ENCODE measurements at regions of chr18 and their contacts with region 1.

Region 1: DNA sequence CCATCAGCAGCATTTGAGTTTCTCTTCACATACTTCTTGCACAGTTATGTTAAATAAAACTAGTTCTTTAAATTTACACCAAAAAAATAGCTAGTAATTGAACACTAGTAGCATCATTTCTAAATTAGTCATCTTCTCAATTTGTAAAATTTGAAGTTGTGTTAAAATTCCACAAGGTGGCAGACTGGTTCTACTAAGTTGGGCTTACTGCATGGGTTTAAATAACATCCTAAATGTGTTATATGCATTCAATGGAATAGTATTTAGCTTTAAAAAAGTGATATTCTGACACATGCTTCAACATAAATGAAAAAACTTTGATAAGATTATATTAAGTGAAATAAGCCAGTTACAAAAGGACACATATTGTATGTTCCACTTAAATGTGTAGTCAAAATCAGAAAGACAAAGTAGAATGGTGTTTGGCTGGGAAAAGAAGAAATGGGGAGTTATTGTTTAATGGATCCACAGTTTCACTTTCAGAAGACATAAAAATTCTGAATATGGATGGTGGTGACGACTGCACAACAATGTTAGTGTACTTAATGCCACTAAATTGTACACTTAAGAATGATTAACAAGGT is 28.7 kb upstream of the RPRD1A start:
- DNase-seq: no peak
- H3K4me3 Mint-ChIP-seq: no peak overlapping the region
- H3K27ac Mint-ChIP-seq: no peak overlapping the region
- H3K4me1 Mint-ChIP-seq: no peaks in the 10 kb centered on the region
- H3K27me3 Mint-ChIP-seq: no peaks in the 10 kb centered on the region

Region 2: DNA sequence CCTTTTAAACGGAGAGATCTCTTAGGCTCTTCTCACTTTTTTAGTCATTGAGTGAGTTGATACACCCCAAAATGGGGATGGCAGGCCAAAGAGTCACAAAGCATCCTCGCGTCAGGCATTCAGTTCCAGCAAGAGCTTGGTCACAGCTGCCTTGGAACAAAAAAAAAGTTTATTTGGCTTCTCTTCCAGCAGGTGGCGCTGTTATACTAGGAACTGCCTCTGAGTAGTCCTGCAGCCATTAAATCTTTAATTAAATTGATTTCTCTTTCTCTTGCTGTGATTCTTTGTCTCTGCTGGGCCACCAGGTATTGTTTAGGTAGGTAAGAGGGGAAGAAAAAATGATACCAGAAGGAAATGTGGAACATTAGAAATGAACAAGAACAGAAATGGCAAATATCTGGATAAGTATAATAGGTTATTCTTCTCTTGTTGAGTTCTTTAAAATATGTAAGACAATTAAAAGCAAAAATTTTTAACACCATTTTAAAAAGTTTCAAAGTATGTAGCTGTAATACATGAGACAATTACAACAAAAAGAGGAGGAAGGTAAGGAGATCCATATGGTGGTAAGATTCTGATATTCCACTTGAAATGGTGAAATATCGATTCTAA is 339.4 kb before region 1 on chr18:
- CTCF ChIA-PET with region 1: interaction called, 3 read pairs
- intact Hi-C with region 1: loop called (anchors 2 kb)
- DNase-seq: peak; percentile 78
- H3K4me3 Mint-ChIP-seq: no peak overlapping the region
- H3K27ac Mint-ChIP-seq: no peak overlapping the region
- H3K4me1 Mint-ChIP-seq: no peaks in the 10 kb centered on the region
- H3K27me3 Mint-ChIP-seq: peaks cover 18% of the 10 kb centered on the region

Region 3: DNA sequence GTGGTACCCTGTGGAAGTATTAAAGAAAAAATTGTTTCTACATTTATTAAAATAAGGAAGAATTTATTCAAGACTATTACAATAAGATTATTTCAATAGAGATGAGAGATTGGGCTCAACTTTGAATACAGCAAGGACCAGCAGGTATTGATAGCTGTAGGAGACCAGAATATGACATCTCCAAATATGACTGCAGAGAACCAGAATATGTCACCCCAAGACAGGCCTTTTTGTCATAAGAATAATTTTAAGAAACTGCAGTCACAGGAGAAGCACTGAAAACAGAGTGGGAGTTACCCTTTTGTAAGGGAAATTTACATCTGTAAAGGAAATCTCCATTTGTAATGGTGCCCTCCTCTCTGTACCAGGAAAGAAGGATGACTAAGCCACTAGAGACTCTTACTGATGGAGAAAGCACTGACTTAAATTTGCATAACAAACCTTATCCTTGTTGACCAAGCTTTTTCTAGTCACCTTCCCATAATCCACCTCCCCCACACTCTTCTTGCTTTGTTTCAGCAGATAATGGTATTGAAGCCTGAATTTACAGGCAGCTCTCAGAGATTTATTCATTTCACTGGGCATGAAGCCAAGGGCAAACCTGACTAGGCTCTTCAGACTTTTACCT is 268.6 kb before region 1 on chr18:
- CTCF ChIA-PET with region 1: no interaction called
- intact Hi-C with region 1: no loop called
- DNase-seq: peak; percentile 62
- H3K4me3 Mint-ChIP-seq: no peak overlapping the region
- H3K27ac Mint-ChIP-seq: peak overlapping the region; percentile 75
- H3K4me1 Mint-ChIP-seq: peaks cover 15% of the 10 kb centered on the region
- H3K27me3 Mint-ChIP-seq: peaks cover 22% of the 10 kb centered on the region

Region 4: DNA sequence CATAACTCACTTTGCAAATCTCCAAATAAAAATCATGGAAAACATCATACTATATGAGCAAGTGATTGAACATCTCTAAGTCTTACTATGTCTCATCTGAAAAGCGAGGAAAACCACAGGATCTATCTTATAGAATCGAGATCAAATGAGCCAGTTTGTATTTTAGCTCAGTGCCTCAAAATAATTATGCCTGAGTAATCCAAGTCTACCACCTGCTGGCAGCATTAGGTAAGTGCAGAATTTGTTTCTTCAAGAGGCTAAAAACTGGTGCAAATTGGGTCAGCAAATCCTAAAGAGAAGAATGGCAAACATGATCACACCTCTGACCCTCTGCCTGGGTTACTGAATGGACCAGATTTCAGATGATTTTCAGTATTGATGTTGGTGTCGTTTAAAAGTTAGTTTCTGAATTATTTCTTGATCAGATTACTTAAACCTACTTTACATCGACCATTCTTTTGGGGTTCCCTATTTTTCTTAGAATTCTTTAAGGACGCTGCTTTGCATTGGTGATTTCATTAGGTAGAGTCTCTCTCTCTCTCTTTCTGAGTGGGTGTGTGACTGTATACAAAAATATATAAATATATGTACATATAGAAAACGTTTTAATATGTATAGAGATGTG is 188.8 kb after region 1 on chr18:
- CTCF ChIA-PET with region 1: interaction called, 60 read pairs
- intact Hi-C with region 1: loop called (anchors 1 kb)
- DNase-seq: peak; percentile 55
- H3K4me3 Mint-ChIP-seq: no peak overlapping the region
- H3K27ac Mint-ChIP-seq: no peak overlapping the region
- H3K4me1 Mint-ChIP-seq: no peaks in the 10 kb centered on the region
- H3K27me3 Mint-ChIP-seq: peaks cover 14% of the 10 kb centered on the region

Region 5: DNA sequence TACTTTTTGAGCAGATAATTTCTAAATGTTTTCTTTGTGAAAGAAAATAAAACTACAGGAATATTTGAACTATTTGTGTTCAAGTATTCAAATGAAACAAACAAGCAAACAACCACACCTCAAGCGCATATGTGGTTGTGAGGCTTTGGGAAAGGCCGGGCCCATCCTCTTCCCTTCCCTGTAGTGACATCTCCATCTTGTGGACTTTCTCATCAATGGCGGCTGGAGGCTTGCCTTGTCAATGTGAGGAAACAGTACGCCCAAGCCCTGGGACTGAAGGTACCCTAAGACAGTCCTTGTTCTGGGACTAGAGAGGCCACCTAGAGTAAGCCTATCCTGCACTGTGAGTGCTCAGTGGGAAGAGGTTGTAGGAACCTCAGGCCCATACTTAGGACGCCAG is 566.0 kb after region 1 on chr18:
- CTCF ChIA-PET with region 1: no interaction called
- intact Hi-C with region 1: loop called (anchors 5 kb)
- DNase-seq: no peak
- H3K4me3 Mint-ChIP-seq: no peak overlapping the region
- H3K27ac Mint-ChIP-seq: no peak overlapping the region
- H3K4me1 Mint-ChIP-seq: no peaks in the 10 kb centered on the region
- H3K27me3 Mint-ChIP-seq: peaks cover 6% of the 10 kb centered on the region

Region 6: GRCh38 chr18:36809590-36810381 is 713.8 kb after region 1 on chr18:
- CTCF ChIA-PET with region 1: no interaction called
- intact Hi-C with region 1: loop called (anchors 10 kb)
- DNase-seq: peak; percentile 28
- H3K4me3 Mint-ChIP-seq: no peak overlapping the region
- H3K27ac Mint-ChIP-seq: no peak overlapping the region
- H3K4me1 Mint-ChIP-seq: peaks cover 10% of the 10 kb centered on the region
- H3K27me3 Mint-ChIP-seq: no peaks in the 10 kb centered on the region

Region 7: DNA sequence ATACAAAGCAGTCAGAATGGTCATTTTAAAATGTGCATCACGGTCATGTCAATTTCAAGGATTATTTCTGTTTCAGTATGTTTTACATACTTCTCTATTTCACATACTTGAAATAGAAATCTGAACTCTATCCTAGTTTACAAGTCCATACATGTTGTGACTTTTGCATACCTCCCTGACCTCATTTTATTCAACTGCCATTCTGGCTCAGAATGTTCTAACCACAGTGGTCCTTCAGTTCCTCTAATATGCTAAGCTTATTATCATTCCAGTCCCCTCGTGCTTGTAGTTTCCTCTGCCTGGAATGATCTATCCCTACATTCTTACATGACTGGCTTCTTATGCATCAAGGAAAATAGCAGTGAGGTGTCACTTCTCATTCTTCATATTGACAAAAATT is 1028.5 kb after region 1 on chr18:
- CTCF ChIA-PET with region 1: no interaction called
- intact Hi-C with region 1: no loop called
- DNase-seq: no peak
- H3K4me3 Mint-ChIP-seq: no peak overlapping the region
- H3K27ac Mint-ChIP-seq: no peak overlapping the region
- H3K4me1 Mint-ChIP-seq: no peaks in the 10 kb centered on the region
- H3K27me3 Mint-ChIP-seq: no peaks in the 10 kb centered on the region

Measured in activated naive CD4-positive, alpha-beta T cell treated with anti-CD3 and anti-CD28 coated beads for 36 hours (primary cell).